Activated naive CD4-positive, alpha-beta T cell treated with anti-CD3 and anti-CD28 coated beads, Interleukin-2, amount 10 ng/mL, durations not matched to agents 7 days and 5 days (primary cell): ENCODE measurements at regions of chr19 and their contacts with region 1.

Region 1: GRCh38 chr19:49676690-49677231 is 310 bp upstream of the PRMT1 start:
- DNase-seq: peak; percentile 99
- H3K4me3 Mint-ChIP-seq: peak overlapping the region; percentile 90
- H3K27ac Mint-ChIP-seq: peak overlapping the region; percentile 97
- H3K4me1 Mint-ChIP-seq: peaks cover 42% of the 10 kb centered on the region
- H3K27me3 Mint-ChIP-seq: no peaks in the 10 kb centered on the region

Region 2: DNA sequence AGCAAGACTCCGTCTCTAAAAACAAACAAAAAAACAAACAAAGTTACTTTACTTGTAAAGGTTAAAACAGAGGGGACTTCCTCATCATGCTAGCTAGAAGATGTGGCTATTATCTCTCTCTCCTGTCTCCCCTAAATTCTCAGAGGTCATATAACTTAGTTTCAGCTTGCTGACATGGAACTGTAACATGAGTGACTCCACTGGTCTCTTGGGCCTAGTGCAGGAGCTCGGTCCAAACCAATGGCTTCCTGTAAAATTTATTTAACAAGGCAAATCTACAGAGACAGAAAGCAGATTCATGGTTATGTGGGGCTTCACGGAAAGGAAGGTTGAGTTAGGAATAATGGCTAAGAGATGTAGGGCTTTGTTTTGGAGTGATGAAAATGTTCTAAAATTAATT is 298.2 kb before region 1 on chr19:
- CTCF ChIA-PET with region 1: no interaction called
- DNase-seq: no peak
- H3K4me3 Mint-ChIP-seq: no peak overlapping the region
- H3K27ac Mint-ChIP-seq: no peak overlapping the region
- H3K4me1 Mint-ChIP-seq: no peaks in the 10 kb centered on the region
- H3K27me3 Mint-ChIP-seq: peaks cover 33% of the 10 kb centered on the region

Region 3: DNA sequence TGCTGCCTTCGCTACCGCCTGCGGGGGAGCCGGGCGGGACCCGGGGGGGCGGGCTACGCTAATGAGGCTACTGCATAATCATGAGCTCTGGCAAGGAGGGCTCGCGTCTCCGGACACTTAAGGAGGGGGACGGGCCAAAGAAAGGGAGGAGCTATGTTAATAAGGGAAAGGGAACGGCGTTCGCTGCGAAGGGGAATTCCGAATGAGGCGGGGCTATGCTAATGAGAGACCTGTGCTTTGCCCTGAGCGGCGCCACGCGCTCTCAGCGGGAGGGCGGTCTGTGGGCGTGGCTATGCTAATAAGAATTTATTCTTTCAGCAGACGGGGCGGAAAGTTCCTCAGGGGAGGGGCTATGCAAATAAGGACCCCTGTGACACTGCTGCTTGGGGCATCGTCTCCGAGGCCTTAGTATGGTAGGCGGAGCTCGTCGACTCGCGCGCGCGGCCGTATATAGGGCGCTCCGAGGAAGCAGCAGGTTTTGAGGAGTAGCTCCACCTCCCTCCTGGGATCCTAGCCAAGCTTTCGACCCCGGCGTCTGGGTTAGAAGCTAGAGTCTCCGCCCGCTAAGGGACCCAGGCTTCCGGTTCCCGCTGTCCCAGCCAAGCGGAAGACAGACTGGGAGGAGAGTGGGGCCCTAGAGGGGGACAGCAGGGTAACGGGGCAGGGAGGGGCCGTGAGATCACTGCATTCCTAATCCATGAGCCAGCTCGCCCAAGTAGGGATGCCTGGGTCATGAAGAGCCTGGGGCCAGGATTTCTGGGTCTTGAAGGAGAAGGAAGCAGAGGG is 36.5 kb before region 1 on chr19 and contains the start of gene RRAS:
- CTCF ChIA-PET with region 1: interaction called, 10 read pairs
- DNase-seq: peak; percentile 100
- H3K4me3 Mint-ChIP-seq: peak within 1 kb of the TSS; percentile 87
- H3K27ac Mint-ChIP-seq: peak within 1 kb of the TSS; percentile 98
- H3K4me1 Mint-ChIP-seq: peaks cover 64% of the 10 kb centered on the region
- H3K27me3 Mint-ChIP-seq: peaks cover 25% of the 10 kb centered on the region